ENCODE measurements at regions of chr22 and their contacts with region 1.

Region 1: GRCh38 chr22:40578171-40578570 is 58.3 kb downstream of the MRTFA start:
- DNase-seq: no peak
- H3K4me3 Mint-ChIP-seq: no peak overlapping the region
- H3K27ac Mint-ChIP-seq: peak overlapping the region; percentile 86
- H3K4me1 Mint-ChIP-seq: peaks cover 23% of the 10 kb centered on the region
- H3K27me3 Mint-ChIP-seq: no peaks in the 10 kb centered on the region

Region 2: GRCh38 chr22:40519284-40519947 is 58.8 kb before region 1 on chr22:
- intact Hi-C with region 1: loop called (anchors 1 kb)
- DNase-seq: no peak
- H3K4me3 Mint-ChIP-seq: peak overlapping the region; percentile 50
- H3K27ac Mint-ChIP-seq: peak overlapping the region; percentile 83
- H3K4me1 Mint-ChIP-seq: peaks cover 26% of the 10 kb centered on the region
- H3K27me3 Mint-ChIP-seq: no peaks in the 10 kb centered on the region

Region 3: DNA sequence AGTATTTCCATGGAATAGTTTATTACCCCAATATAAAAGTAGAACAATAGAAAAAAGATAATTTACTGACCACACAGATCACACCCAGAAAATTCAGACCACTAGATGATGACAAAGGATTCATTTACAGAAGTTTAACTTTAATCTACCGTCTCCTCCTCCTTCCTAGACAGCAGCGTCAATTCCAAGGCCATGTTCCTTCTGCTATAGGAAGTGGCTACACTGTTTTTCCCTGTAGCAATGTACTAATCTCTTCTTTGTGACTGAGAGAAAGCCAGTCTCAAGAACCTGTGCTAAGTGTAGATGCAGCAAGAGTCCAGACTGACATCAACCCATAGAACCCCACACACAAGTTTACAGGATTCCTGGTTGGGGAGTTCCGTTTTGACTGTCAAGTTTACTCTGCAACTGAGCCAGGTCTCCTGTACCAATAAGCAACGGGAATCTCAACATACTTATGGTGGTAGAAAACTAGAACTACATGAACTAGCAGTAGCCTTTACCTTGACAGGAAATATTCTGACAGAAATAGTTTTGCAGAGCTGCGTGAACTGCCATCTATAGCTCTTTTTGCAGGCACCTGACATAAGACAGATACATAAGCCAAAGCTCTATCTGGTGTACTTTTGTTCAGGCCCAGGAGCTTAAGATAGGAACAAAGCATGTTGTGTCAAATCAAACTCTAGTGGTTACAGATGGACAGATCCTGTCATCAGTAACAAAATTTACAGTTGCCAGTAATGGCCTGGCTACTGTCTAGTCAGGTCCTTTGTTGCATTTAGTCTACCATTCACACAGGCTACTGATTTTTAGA is 15.5 kb after region 1 on chr22:
- intact Hi-C with region 1: loop called (anchors 2 kb)
- DNase-seq: no peak
- H3K4me3 Mint-ChIP-seq: no peak overlapping the region
- H3K27ac Mint-ChIP-seq: peak overlapping the region; percentile 6
- H3K4me1 Mint-ChIP-seq: peaks cover 28% of the 10 kb centered on the region
- H3K27me3 Mint-ChIP-seq: no peaks in the 10 kb centered on the region